A673 (cell line): ENCODE measurements at regions of chr22 and their contacts with region 1.

Region 1: GRCh38 chr22:36331306-36331911 is 56.4 kb downstream of the MYH9 start:
- DNase-seq: peak; percentile 94
- H3K4me3 ChIP-seq: no peak overlapping the region
- H3K27ac ChIP-seq: peak overlapping the region; percentile 96
- H3K4me1 ChIP-seq: peaks cover 79% of the 10 kb centered on the region
- H3K27me3 ChIP-seq: no peaks in the 10 kb centered on the region
- CTCF ChIP-seq: no peak

Region 2: DNA sequence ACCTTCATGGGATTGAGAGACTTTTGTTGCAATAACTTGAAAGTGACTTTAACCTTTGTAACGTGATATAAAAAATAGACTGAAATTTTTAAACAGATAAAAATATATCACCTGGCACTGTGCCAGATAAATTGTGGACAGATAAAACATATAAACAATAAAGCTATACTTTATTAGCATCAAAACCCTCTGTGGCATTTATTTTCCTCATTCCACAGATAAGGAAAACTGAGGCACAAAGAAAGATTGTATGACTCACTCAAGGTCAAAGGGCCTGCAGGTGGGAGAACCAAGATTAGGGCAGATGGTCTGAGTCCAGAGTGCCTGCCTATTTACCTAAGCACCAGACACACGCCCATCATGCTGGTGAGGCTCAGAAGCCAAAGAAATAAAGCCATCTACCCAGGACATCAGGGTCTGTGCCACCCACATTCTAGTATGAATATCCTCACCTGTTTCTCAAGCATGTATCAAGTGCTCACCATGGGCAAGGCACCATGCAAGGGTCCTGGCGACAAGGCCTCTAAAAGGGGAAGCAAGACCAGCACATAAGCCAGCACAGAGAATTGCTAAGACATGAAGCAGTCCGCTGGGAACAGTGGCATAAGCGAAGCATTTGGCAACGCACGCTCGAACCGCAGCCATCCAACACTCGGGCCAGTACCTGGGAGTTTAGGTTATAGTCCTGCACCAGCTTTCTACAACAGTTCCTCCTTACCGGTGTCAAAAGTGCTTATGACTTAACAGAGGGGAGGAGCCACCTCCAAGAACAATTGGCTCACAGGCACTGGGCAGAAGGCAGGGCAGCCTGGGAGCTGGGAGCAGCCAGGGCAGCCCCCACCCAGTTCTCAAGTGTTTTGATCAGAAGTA is 38.7 kb after region 1 on chr22:
- CTCF ChIA-PET with region 1: no interaction called
- POLR2A ChIA-PET with region 1: interaction called, 3 read pairs
- intact Hi-C with region 1: loop called (anchors 5 kb)
- DNase-seq: peak; percentile 33
- H3K4me3 ChIP-seq: peak overlapping the region; percentile 10
- H3K27ac ChIP-seq: peak overlapping the region; percentile 87
- H3K4me1 ChIP-seq: peaks cover 71% of the 10 kb centered on the region
- H3K27me3 ChIP-seq: no peaks in the 10 kb centered on the region
- CTCF ChIP-seq: no peak